ENCODE measurements at regions of chr16 and their contacts with region 1.

Region 1: GRCh38 chr16:25966172-25967097 is 274.7 kb downstream of the HS3ST4 start:
- DNase-seq: no peak
- ATAC-seq: no peak
- H3K4me3 ChIP-seq: no peak overlapping the region
- H3K27ac ChIP-seq: no peak overlapping the region
- H3K4me1 ChIP-seq: no peaks in the 10 kb centered on the region
- H3K27me3 ChIP-seq: no peaks in the 10 kb centered on the region
- CTCF ChIP-seq: no peak
- POLR2A ChIP-seq: no peak

Region 2: DNA sequence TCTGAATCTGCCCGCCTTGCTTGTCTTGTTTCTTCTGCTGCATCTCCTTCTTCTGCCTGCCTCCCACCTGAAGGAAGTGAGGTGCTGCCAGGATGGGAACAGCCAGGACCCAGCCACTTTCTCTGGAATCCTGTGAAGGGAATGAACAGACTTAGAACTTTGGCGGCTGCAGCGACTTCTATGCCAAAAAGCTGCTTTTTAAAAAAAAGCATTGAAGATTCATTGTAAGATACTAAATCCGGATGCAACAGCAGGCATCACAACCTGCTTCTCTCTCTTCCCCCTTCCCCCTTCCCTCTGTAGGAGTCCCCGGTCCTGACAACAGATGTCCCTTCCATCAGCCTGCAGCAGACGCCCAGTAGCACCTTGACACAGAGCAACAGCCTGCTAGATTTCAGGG is 98.3 kb before region 1 on chr16:
- in situ Hi-C with region 1: loop called in 1 of 4 experiments (anchors 25 kb)
- intact Hi-C with region 1: no loop called
- DNase-seq: no peak
- ATAC-seq: no peak
- H3K4me3 ChIP-seq: no peak overlapping the region
- H3K27ac ChIP-seq: no peak overlapping the region
- H3K4me1 ChIP-seq: no peaks in the 10 kb centered on the region
- H3K27me3 ChIP-seq: no peaks in the 10 kb centered on the region
- CTCF ChIP-seq: no peak
- POLR2A ChIP-seq: no peak